ENCODE measurements at regions of chr17 and their contacts with region 1.

Region 1: GRCh38 chr17:50177983-50178834 is 12.4 kb downstream of the SGCA start:
- DNase-seq: peak; percentile 83
- ATAC-seq: peak; percentile 84

Region 2: DNA sequence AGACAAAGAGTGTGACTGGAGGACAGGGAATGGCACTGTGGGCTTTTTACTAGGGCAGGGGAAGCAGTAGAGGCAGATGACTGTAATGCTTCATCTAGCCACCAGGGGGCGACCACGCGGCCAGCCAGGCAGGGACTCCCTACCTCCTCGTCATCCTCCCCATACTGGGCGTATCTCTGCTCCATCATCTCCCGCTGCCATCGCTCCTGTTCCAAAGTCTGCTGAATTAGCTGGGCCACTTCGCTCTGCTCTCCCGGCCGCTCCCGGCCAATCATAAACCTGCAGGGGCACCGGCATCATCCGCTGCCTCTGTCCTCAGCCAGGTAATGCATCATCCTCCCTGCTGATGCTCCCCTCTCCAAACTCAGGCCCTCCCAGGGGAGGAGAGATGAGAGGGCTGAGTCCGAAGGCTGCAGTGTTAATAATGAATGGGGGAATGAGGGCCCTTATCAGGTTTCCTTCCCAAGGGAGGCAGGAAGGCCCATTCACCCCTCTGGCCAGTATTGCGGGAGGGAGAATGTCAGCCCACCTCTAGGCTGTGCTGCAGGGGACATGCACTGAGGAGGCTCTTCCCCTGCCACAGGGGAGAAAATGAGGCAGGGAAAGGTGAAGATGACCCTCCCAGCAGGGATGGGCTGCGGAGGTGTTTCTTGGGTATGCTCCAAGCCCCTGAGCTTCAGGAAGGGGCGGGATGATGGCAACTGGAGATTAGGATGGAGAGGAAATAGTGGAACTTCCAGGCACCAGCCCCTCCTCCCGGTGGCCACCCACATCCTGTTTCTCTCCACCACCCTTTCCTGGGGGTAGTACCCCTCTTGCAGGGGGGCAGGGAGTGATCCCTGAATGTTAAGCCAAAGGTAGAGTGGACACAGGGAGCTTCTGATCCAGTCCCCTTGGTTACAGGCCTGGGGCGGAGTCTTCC is 38.0 kb before region 1 on chr17:
- intact Hi-C with region 1: loop called (anchors 2 kb)
- DNase-seq: peak; percentile 93
- ATAC-seq: peak; percentile 76